Activated B cell treated with CpG ODN at 0.5 μM for 24 hours (primary cell): ENCODE measurements at regions of chr11 and their contacts with region 1.

Region 1: GRCh38 chr11:47578524-47579460 is at the starts of genes KBTBD4 and NDUFS3:
- DNase-seq: peak; percentile 90
- ATAC-seq: peak; percentile 93
- H3K4me3 Mint-ChIP-seq: peak within 1 kb of the TSS; percentile 99
- H3K27ac Mint-ChIP-seq: peak within 1 kb of the TSS; percentile 97
- H3K4me1 Mint-ChIP-seq: peaks cover 38% of the 10 kb centered on the region
- H3K27me3 Mint-ChIP-seq: no peaks in the 10 kb centered on the region
- CTCF ChIP-seq: no peak
- total RNA-seq, gene KBTBD4: 19.5 and 20.4 TPM in 2 replicates
- total RNA-seq, gene NDUFS3: 95.9 and 102 TPM in 2 replicates

Region 2: DNA sequence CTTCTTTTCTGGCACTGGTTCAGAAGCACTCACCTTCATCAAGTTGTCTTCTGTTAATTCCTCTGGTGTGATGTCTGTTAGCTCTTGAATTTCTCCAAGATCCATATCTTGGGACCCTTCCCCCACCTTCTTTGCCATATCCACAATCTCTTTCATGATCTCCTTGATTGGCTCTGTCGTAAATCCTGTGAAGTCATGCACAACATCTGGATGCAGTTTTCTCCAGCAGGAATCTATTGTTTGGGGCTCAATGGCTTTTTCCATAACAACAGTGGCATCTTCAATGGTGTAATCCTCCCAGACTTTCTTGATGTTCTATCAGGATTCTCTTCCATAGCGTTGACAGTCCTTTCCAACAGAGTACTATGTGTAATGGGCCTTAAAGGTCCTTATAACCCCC is 545.4 kb before region 1 on chr11:
- CTCF ChIA-PET with region 1: no interaction called
- POLR2A ChIA-PET with region 1: interaction called, 10 read pairs
- intact Hi-C with region 1: no loop called
- DNase-seq: no peak
- ATAC-seq: no peak
- H3K4me3 Mint-ChIP-seq: no peak overlapping the region
- H3K27ac Mint-ChIP-seq: no peak overlapping the region
- H3K4me1 Mint-ChIP-seq: no peaks in the 10 kb centered on the region
- H3K27me3 Mint-ChIP-seq: no peaks in the 10 kb centered on the region
- CTCF ChIP-seq: no peak

Region 3: DNA sequence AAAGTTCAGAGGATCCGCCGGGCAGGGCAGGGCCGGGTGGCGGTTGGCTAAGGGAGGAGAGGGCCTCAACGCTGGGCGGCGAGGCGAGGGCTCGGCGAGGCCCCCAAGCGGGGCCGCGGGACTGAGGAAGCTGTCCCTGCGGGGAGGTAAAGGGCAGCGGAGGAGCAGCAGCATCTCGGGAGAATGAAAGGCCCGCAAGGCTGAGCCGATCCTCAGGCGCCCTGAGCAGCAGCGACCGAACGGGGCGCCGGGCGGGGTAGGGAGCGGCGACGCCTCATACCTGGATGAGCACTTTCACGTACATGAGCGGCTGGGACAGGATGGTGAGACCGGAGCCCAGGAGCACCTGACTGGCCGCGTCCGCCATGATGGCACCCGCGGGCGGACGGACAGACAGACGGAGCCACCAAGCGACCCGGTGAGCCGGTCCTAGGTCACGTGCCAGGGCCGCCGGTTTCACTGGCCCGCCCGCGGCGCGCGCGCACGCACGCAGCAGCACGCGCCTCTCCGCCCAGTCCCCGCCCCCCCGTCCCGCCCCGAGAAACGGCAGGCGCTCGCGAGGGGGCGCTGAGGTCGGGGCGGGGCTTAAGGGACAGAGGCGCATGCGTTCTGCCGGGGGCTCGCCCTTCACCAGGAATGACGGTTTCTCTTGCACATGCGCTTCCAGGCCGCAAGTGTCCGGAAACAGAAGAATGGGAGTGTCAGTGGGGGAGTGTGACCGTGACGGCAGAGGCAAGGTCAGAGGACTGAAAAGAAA is 63.5 kb after region 1 on chr11 and contains the start of gene MTCH2:
- CTCF ChIA-PET with region 1: no interaction called
- POLR2A ChIA-PET with region 1: interaction called, 7 read pairs
- intact Hi-C with region 1: loop called (anchors 2 kb)
- DNase-seq: peak; percentile 95
- ATAC-seq: peak; percentile 94
- H3K4me3 Mint-ChIP-seq: peak within 1 kb of the TSS; percentile 94
- H3K27ac Mint-ChIP-seq: peak within 1 kb of the TSS; percentile 95
- H3K4me1 Mint-ChIP-seq: peaks cover 25% of the 10 kb centered on the region
- H3K27me3 Mint-ChIP-seq: no peaks in the 10 kb centered on the region
- CTCF ChIP-seq: no peak
- total RNA-seq, gene MTCH2: 73.3 and 81.7 TPM in 2 replicates

Region 4: DNA sequence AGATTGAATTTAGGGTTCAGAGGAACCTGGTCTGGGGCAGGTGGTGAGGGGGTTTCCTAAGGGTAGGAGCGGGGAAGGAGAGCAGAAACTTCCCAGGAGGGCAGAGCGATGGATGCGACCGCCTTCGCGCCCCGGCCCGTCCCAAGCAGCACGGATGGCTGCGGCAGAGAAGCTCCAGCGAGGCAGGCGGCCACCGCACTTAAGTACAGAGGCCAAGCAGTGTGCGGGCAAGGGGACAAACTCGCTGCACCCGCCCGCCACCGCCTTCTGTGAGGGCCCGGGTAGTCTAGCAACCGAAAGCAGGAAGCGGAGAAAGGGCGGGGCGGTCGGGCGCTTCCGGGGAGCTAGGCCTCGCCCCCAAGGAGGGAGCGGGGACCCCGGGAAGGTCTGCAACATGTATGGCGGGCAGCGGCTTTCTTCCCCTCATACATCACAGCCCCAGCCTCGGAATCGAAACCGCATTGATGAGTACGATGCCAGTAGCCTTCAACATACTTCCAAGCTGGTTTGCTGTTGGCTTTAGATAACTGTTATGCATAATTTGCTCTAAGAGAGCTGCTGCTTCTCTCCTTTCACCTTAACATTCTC is 136.4 kb after region 1 on chr11 and contains the start of gene AGBL2:
- CTCF ChIA-PET with region 1: no interaction called
- POLR2A ChIA-PET with region 1: interaction called, 9 read pairs
- intact Hi-C with region 1: loop called (anchors 1 kb)
- DNase-seq: peak; percentile 82
- ATAC-seq: peak; percentile 99
- H3K4me3 Mint-ChIP-seq: peak within 1 kb of the TSS; percentile 96
- H3K27ac Mint-ChIP-seq: peak within 1 kb of the TSS; percentile 97
- H3K4me1 Mint-ChIP-seq: peaks cover 11% of the 10 kb centered on the region
- H3K27me3 Mint-ChIP-seq: no peaks in the 10 kb centered on the region
- CTCF ChIP-seq: no peak
- total RNA-seq, gene AGBL2: 7.0 and 8.2 TPM in 2 replicates

Region 5: GRCh38 chr11:47847892-47848635 is 269.3 kb after region 1 on chr11 and contains the start of gene NUP160:
- CTCF ChIA-PET with region 1: no interaction called
- POLR2A ChIA-PET with region 1: no interaction called
- intact Hi-C with region 1: loop called (anchors 1 kb)
- DNase-seq: peak; percentile 92
- ATAC-seq: peak; percentile 83
- H3K4me3 Mint-ChIP-seq: peak within 1 kb of the TSS; percentile 98
- H3K27ac Mint-ChIP-seq: peak within 1 kb of the TSS; percentile 97
- H3K4me1 Mint-ChIP-seq: peaks cover 67% of the 10 kb centered on the region
- H3K27me3 Mint-ChIP-seq: no peaks in the 10 kb centered on the region
- CTCF ChIP-seq: no peak
- total RNA-seq, gene NUP160: 53.2 and 70.8 TPM in 2 replicates

Region 6: GRCh38 chr11:48172818-48173609 is 594.2 kb after region 1 on chr11:
- CTCF ChIA-PET with region 1: no interaction called
- POLR2A ChIA-PET with region 1: no interaction called
- intact Hi-C with region 1: no loop called
- DNase-seq: peak; percentile 37
- ATAC-seq: peak; percentile 71
- H3K4me3 Mint-ChIP-seq: no peak overlapping the region
- H3K27ac Mint-ChIP-seq: no peak overlapping the region
- H3K4me1 Mint-ChIP-seq: peaks cover 29% of the 10 kb centered on the region
- H3K27me3 Mint-ChIP-seq: no peaks in the 10 kb centered on the region
- CTCF ChIP-seq: peak; percentile 69